Natural killer cell (primary cell): ENCODE measurements at regions of chr9 and their contacts with region 1.

Region 1: DNA sequence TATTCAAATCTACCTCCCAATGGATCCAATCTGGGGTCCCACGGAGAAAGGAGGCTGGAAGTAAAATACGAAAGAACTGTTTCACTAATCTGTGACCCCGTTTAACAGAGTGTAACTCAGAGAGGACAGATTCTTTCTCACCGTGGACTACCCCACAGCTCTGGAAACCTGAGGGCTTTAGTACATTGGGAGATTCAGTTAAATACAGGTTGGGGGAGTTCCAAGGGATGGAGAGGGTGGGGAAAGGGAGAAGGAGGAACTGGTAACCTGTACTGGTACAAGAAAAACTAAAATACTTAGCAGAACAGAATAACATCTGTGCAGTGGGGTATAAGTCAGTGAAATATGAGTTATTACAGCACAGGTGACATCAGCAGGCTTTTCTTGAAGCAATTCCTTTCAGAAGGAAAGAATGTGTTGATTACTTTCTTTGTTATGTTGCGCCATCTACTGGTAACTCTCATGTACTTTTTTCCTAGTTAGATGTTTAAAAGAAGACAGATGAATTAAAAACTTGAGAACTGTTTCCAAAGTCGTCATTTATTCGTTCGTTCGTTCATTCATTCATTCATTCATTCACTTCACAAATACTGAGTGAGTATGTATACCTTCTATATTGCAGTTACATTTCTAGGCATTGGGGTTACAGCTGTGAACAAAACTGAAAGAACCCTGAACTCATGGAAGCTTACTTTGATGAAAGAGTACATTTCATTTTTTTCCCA is 30.0 kb upstream of the STOM start:
- DNase-seq: peak in 1 of 2 donors; percentile 83
- ATAC-seq: peak; percentile 54 to 65 (median 64)
- H3K4me3 ChIP-seq: no peak overlapping the region
- H3K4me3 Mint-ChIP-seq: no peak overlapping the region
- H3K27ac ChIP-seq: no peak overlapping the region
- H3K27ac Mint-ChIP-seq: no peak overlapping the region
- H3K4me1 ChIP-seq: no peaks in the 10 kb centered on the region
- H3K4me1 Mint-ChIP-seq: no peaks in the 10 kb centered on the region
- H3K27me3 ChIP-seq: no peaks in the 10 kb centered on the region
- H3K27me3 Mint-ChIP-seq: no peaks in the 10 kb centered on the region
- CTCF ChIP-seq: peak; percentile 86

Region 2: GRCh38 chr9:121376214-121376830 is 23.7 kb before region 1 on chr9:
- intact Hi-C with region 1: loop called (anchors 1 kb)
- DNase-seq: peak in 1 of 2 donors; percentile 53
- ATAC-seq: peak in 2 of 3 donors; percentile 52 to 59
- H3K4me3 ChIP-seq: no peak overlapping the region
- H3K4me3 Mint-ChIP-seq: no peak overlapping the region
- H3K27ac ChIP-seq: no peak overlapping the region
- H3K27ac Mint-ChIP-seq: no peak overlapping the region
- H3K4me1 ChIP-seq: no peaks in the 10 kb centered on the region
- H3K4me1 Mint-ChIP-seq: peaks cover 9 to 22% of the 10 kb centered on the region in 2 donors
- H3K27me3 ChIP-seq: no peaks in the 10 kb centered on the region
- H3K27me3 Mint-ChIP-seq: no peaks in the 10 kb centered on the region
- CTCF ChIP-seq: peak; percentile 84